ENCODE measurements at regions of chr4 and their contacts with region 1.

Region 1: GRCh38 chr4:112145326-112145819 is at the start of gene FAM241A:
- DNase-seq: peak; percentile 94
- ATAC-seq: peak; percentile 99
- total RNA-seq, gene FAM241A: 8.8 TPM

Region 2: DNA sequence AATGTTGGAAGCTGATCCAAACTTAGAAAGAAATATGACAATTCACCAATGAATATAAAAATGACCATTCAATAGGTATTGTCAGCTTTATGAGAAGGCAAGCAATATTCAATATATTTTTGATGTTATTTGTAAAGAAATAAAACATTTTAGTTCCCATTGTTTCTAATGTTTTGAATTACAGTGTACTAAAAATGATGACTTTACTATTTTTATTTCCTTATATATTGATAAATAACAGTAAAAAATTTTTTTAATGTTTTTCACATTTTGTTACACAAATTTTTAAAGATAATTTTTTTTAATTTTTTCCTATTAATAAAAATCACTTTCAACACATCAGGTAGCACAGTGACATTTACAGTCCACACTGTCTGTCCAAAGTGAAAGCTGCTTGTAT is 565.6 kb before region 1 on chr4:
- intact Hi-C with region 1: no loop called
- DNase-seq: no peak
- ATAC-seq: no peak

Region 3: DNA sequence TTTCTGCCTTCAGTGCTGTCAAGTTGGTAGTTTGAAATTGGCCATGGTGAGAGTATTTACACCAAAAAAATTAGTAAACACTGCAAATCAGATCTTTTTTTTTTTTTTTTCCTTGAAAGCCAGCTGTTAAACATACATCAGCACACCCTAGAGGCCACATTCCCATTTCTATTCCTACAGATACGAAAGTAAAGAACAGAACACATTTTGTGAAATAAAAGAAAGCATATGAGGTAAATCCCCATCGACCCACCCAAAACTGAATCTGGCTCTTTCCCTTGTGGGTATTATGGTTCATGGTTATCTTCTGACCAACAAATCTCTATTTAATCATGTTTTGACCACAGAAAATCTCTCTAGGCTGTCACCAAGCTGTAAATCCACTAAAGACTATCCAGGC is 44.4 kb after region 1 on chr4:
- intact Hi-C with region 1: loop called (anchors 5 kb)
- DNase-seq: no peak
- ATAC-seq: no peak

Region 4: GRCh38 chr4:112231779-112232713 is 86.7 kb after region 1 on chr4 and contains the start of gene AP1AR:
- intact Hi-C with region 1: loop called (anchors 1 kb)
- DNase-seq: peak; percentile 91
- ATAC-seq: peak; percentile 82
- total RNA-seq, gene AP1AR: 9.4 TPM

Region 5: GRCh38 chr4:112379306-112379705 is 233.9 kb after region 1 on chr4:
- intact Hi-C with region 1: no loop called
- DNase-seq: no peak
- ATAC-seq: no peak

Measured in Right ventricle myocardium inferior (tissue), 1 donor.